Tibial artery (tissue), 4 donors: ENCODE measurements at regions of chr2 and their contacts with region 1.

Region 1: DNA sequence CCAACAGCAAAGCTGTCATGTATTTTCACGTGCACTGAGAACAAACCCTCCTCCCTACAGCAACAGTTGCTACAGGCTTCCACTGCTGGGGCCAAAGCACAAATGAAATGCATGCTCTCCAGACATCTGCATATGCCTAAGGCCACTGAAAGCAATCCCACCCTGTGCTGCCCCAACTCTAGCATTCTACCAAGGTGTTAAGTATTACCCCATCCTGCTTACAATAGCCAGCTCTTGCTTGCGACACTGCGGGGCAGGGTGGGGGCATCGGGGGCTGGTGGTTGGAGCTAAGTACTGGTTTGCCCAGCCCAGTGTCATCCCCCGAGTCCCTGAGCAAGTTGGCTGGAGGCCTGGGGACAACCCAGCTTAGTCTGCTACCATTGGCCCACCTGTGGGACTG is 742.5 kb downstream of the TDRD15 start:
- DNase-seq: no peak
- H3K4me3 ChIP-seq: no peak overlapping the region
- H3K27ac ChIP-seq: no peak overlapping the region
- H3K4me1 ChIP-seq: no peaks in the 10 kb centered on the region
- H3K27me3 ChIP-seq: no peaks in the 10 kb centered on the region
- CTCF ChIP-seq: no peak

Region 2: GRCh38 chr2:21617885-21618434 is 248.4 kb before region 1 on chr2:
- intact Hi-C with region 1: no loop called
- DNase-seq: no peak
- H3K4me3 ChIP-seq: no peak overlapping the region
- H3K27ac ChIP-seq: no peak overlapping the region
- H3K4me1 ChIP-seq: no peaks in the 10 kb centered on the region
- H3K27me3 ChIP-seq: no peaks in the 10 kb centered on the region
- CTCF ChIP-seq: no peak

Region 3: GRCh38 chr2:23335550-23335949 is 1469.2 kb after region 1 on chr2:
- intact Hi-C with region 1: loop called (anchors 5 kb)
- DNase-seq: no peak
- H3K4me3 ChIP-seq: no peak overlapping the region
- H3K27ac ChIP-seq: no peak overlapping the region
- H3K4me1 ChIP-seq: no peaks in the 10 kb centered on the region
- H3K27me3 ChIP-seq: peaks cover 0 to 7% of the 10 kb centered on the region in 2 donors
- CTCF ChIP-seq: no peak

Region 4: DNA sequence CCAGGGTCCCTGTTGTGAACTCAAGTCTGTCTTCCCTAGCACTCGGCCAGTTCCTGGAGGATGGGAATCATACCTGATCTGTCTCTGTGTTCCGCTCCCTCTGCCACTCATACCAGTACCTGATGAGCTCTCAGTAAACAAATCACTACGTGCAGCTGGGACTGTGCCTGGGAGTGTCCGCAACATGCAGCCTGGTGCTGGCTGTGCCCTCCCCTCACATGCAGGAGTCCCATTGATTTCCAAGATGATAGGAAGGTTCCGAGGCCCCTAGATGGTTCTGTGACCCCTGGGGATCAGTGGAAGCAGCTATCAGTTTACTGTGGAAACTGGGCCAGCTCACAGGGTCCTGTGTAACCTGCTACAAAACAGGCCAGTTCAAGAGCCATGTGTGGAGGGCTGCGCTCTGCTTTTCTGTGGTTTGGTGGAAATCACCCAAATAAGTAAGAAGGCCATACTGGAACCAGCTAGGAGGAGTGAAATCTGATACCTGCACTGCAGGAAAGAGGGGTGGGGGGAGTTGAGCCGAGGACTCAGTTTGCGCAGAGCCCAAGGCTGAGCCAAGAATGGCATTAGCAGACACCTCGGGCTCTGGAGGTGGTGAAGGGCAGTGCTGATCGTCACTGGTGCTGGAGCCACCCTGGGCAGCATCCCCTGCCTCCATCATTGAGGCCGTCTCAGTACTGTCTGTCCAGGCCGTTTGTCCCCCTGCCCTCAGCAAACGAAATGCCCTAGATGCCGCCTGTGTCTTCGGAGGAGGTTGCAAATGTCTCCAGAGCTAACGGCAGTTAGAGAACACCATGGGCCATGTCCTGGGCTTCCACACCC is 1612.0 kb after region 1 on chr2:
- intact Hi-C with region 1: no loop called
- DNase-seq: no peak
- H3K4me3 ChIP-seq: no peak overlapping the region
- H3K27ac ChIP-seq: no peak overlapping the region
- H3K4me1 ChIP-seq: peaks cover 0 to 19% (median 3%) of the 10 kb centered on the region in 4 donors
- H3K27me3 ChIP-seq: no peaks in the 10 kb centered on the region
- CTCF ChIP-seq: no peak